WTC11 (cell line): ENCODE measurements at regions of chr12 and their contacts with region 1.

Region 1: GRCh38 chr12:96215919-96216273 is 21.7 kb downstream of the ELK3 start:
- DNase-seq: no peak
- ATAC-seq: no peak
- H3K4me3 Mint-ChIP-seq: no peak overlapping the region
- H3K27ac Mint-ChIP-seq: no peak overlapping the region
- H3K4me1 Mint-ChIP-seq: peaks cover 54% of the 10 kb centered on the region
- H3K27me3 Mint-ChIP-seq: no peaks in the 10 kb centered on the region
- CTCF ChIP-seq: no peak

Region 2: GRCh38 chr12:96035278-96036236 is 180.3 kb before region 1 on chr12 and contains the start of gene LTA4H:
- CTCF ChIA-PET with region 1: interaction called, 11 read pairs
- POLR2A ChIA-PET with region 1: interaction called, 4 read pairs
- DNase-seq: peak; percentile 97
- ATAC-seq: peak; percentile 93
- H3K4me3 Mint-ChIP-seq: no peak within 1 kb of the TSS
- H3K27ac Mint-ChIP-seq: no peak within 1 kb of the TSS
- H3K4me1 Mint-ChIP-seq: peaks cover 6% of the 10 kb centered on the region
- H3K27me3 Mint-ChIP-seq: no peaks in the 10 kb centered on the region
- CTCF ChIP-seq: no peak
- total RNA-seq, gene LTA4H: 134 to 172 TPM (median 162 TPM) in 3 replicates

Region 3: DNA sequence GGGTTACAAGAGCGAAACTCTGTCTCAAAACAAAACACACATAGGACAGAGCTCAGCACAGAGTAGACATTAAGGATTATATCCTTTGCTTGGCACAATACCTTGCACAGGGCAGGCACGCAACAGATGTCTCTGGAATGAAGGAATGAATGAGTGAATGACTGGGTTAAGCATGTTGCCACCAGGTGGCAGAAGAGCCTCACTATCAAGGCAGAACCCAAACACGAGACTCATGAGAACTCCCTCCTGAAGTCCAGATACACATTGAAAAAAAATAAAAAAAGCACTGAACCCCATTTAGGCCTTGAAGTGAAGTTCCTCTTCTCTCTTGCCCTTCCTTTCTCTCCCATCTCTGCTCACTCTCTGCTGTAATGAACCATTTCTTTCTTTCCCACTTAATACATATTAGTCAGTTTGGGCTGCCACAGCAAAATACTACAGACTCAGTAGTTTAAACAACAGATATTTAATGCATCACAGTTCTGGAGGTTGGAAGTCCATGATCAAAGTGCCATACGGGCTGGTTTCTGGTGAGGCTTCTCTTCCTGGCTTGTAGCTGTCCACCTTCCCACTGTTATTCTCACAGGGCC is 153.9 kb before region 1 on chr12:
- CTCF ChIA-PET with region 1: interaction called, 22 read pairs
- POLR2A ChIA-PET with region 1: no interaction called
- DNase-seq: peak; percentile 78
- ATAC-seq: peak; percentile 88
- H3K4me3 Mint-ChIP-seq: no peak overlapping the region
- H3K27ac Mint-ChIP-seq: no peak overlapping the region
- H3K4me1 Mint-ChIP-seq: peaks cover 11% of the 10 kb centered on the region
- H3K27me3 Mint-ChIP-seq: no peaks in the 10 kb centered on the region; the same call in 1 of the 2 replicates
- CTCF ChIP-seq: peak; percentile 71

Region 4: GRCh38 chr12:96073346-96074330 is 142.3 kb before region 1 on chr12:
- CTCF ChIA-PET with region 1: interaction called, 11 read pairs
- POLR2A ChIA-PET with region 1: no interaction called
- DNase-seq: no peak
- ATAC-seq: no peak
- H3K4me3 Mint-ChIP-seq: no peak overlapping the region
- H3K27ac Mint-ChIP-seq: no peak overlapping the region
- H3K4me1 Mint-ChIP-seq: peaks cover 15% of the 10 kb centered on the region
- H3K27me3 Mint-ChIP-seq: no peaks in the 10 kb centered on the region
- CTCF ChIP-seq: no peak

Region 5: GRCh38 chr12:96399919-96400797 is 184.3 kb after region 1 on chr12 and contains the start of gene CDK17:
- CTCF ChIA-PET with region 1: interaction called, 14 read pairs
- POLR2A ChIA-PET with region 1: no interaction called
- DNase-seq: peak; percentile 69
- ATAC-seq: peak; percentile 74
- H3K4me3 Mint-ChIP-seq: peak within 1 kb of the TSS; percentile 90
- H3K27ac Mint-ChIP-seq: peak within 1 kb of the TSS; percentile 81
- H3K4me1 Mint-ChIP-seq: peaks cover 63% of the 10 kb centered on the region
- H3K27me3 Mint-ChIP-seq: no peaks in the 10 kb centered on the region
- CTCF ChIP-seq: no peak
- total RNA-seq, gene CDK17: 18.7 to 20.0 TPM (median 19.4 TPM) in 3 replicates

Region 6: GRCh38 chr12:96516472-96517430 is 300.9 kb after region 1 on chr12:
- CTCF ChIA-PET with region 1: interaction called, 22 read pairs
- POLR2A ChIA-PET with region 1: interaction called, 4 read pairs
- DNase-seq: peak; percentile 79
- ATAC-seq: peak; percentile 28; the same call in 1 of the 2 replicates
- H3K4me3 Mint-ChIP-seq: no peak overlapping the region
- H3K27ac Mint-ChIP-seq: no peak overlapping the region
- H3K4me1 Mint-ChIP-seq: peaks cover 20% of the 10 kb centered on the region
- H3K27me3 Mint-ChIP-seq: no peaks in the 10 kb centered on the region
- CTCF ChIP-seq: peak; percentile 61